Posterior vena cava (tissue), 2 donors: ENCODE measurements at regions of chr17 and their contacts with region 1.

Region 1: GRCh38 chr17:77190576-77190975 is 49.8 kb downstream of the SEC14L1 start:
- DNase-seq: no peak

Region 2: DNA sequence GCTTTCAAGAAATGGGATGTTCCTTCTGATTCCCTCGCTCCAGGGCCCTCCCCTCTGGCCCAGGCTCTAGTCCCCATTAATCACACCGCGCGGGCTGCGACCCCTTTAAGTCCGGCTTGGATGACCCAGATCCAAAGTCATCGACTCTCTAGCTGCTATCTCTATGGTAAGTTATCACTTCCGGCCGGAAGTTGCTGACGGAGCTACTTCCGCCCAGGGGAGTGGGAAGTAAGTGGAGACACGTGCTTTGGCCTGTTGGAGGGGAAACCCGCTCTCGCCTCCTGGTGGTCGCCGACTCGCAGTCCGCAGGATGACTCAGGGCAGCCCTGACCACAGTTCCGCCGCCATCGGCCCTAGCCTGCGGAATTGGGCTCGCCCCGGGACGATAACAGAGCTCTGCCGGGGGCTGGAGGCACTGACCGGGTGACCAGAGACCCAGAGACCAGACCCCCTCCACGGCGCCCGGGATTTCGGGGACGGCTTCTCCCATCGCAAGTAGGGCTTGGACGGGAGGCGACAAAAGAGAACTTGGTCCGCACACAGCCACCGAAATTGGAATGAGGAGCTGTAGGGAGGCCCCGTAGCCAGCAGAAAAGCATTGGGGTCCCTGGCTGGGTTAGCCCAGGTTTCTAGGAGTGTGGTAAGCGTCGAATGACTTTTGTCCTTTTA is 102.0 kb before region 1 on chr17:
- intact Hi-C with region 1: no loop called
- DNase-seq: peak; percentile 99

Region 3: GRCh38 chr17:77140166-77140878 is 50.3 kb before region 1 on chr17:
- intact Hi-C with region 1: loop called in 1 of 2 experiments (anchors 10 kb)
- DNase-seq: peak; percentile 100

Region 4: GRCh38 chr17:77247048-77247541 is 56.5 kb after region 1 on chr17:
- intact Hi-C with region 1: loop called in 1 of 2 experiments (anchors 1 kb)
- DNase-seq: peak; percentile 96

Region 5: GRCh38 chr17:78940708-78941107 is 1750.1 kb after region 1 on chr17:
- intact Hi-C with region 1: loop called in 1 of 2 experiments (anchors 10 kb)
- DNase-seq: no peak